Endothelial cell of umbilical vein (primary cell): ENCODE measurements at regions of chr4 and their contacts with region 1.

Region 1: DNA sequence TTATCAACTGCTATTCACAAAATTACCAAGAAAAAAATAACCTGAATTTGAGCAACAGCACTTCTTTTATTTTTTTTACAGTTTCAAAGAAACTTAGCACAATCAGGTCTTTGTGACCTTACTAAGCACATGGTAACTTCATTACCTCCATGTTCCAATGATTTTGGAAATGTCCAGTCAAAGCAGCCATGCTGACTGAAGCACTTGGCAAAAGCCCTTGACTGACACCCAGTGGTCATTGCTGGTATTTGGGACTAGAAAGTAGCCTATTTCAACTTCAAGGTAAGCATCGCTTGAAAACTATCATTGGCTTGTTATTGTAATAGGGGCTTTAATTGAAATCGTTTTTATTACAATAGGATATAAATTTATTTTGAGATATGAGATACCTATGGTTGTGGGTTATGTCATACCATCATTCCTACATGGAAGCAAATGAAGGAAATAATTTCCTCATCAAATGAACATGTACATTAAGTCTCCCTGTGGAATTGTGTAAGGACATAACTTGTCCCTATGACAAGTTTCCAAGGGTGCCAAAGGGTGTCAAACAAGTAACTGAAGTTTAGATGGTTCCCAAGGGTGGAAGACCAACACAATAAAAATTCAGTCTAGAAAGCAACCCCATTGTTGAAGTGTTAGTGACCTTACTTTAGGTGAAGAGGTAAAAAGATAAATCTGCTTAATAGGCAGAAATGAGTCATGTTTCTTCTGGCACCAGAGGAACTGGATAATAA is 15.2 kb upstream of the ANXA10 start:
- DNase-seq: peak; percentile 81
- H3K4me3 ChIP-seq: no peak overlapping the region
- H3K27ac ChIP-seq: no peak overlapping the region
- H3K4me1 ChIP-seq: peaks cover 8% of the 10 kb centered on the region
- H3K27me3 ChIP-seq: no peaks in the 10 kb centered on the region
- CTCF ChIP-seq: peak; percentile 73 to 75
- POLR2A ChIP-seq: no peak

Region 2: GRCh38 chr4:167290678-167291077 is 786.5 kb before region 1 on chr4:
- CTCF ChIA-PET with region 1: no interaction called
- POLR2A ChIA-PET with region 1: no interaction called
- dilution Hi-C with region 1: no loop called
- intact Hi-C with region 1: loop called (anchors 2 kb)
- DNase-seq: peak; percentile 11
- H3K4me3 ChIP-seq: no peak overlapping the region
- H3K27ac ChIP-seq: no peak overlapping the region
- H3K4me1 ChIP-seq: no peaks in the 10 kb centered on the region
- H3K27me3 ChIP-seq: no peaks in the 10 kb centered on the region
- CTCF ChIP-seq: peak; percentile 12 to 18
- POLR2A ChIP-seq: no peak

Region 3: GRCh38 chr4:167622481-167623246 is 454.5 kb before region 1 on chr4:
- CTCF ChIA-PET with region 1: interaction called, 7 read pairs
- POLR2A ChIA-PET with region 1: no interaction called
- dilution Hi-C with region 1: no loop called
- intact Hi-C with region 1: loop called (anchors 1 kb)
- DNase-seq: peak; percentile 53
- H3K4me3 ChIP-seq: no peak overlapping the region
- H3K27ac ChIP-seq: no peak overlapping the region
- H3K4me1 ChIP-seq: no peaks in the 10 kb centered on the region
- H3K27me3 ChIP-seq: no peaks in the 10 kb centered on the region
- CTCF ChIP-seq: peak; percentile 78 to 91
- POLR2A ChIP-seq: no peak

Region 4: GRCh38 chr4:167802463-167803212 is 274.5 kb before region 1 on chr4:
- CTCF ChIA-PET with region 1: no interaction called
- POLR2A ChIA-PET with region 1: no interaction called
- dilution Hi-C with region 1: no loop called
- intact Hi-C with region 1: no loop called
- DNase-seq: no peak
- H3K4me3 ChIP-seq: no peak overlapping the region
- H3K27ac ChIP-seq: no peak overlapping the region
- H3K4me1 ChIP-seq: no peaks in the 10 kb centered on the region
- H3K27me3 ChIP-seq: no peaks in the 10 kb centered on the region
- CTCF ChIP-seq: no peak
- POLR2A ChIP-seq: no peak

Region 5: GRCh38 chr4:167897116-167897515 is 180.0 kb before region 1 on chr4:
- CTCF ChIA-PET with region 1: no interaction called
- POLR2A ChIA-PET with region 1: no interaction called
- dilution Hi-C with region 1: no loop called
- intact Hi-C with region 1: loop called (anchors 1 kb)
- DNase-seq: peak; percentile 96
- H3K4me3 ChIP-seq: no peak overlapping the region
- H3K27ac ChIP-seq: peak overlapping the region; percentile 67
- H3K4me1 ChIP-seq: peaks cover 2% of the 10 kb centered on the region
- H3K27me3 ChIP-seq: no peaks in the 10 kb centered on the region
- CTCF ChIP-seq: no peak
- POLR2A ChIP-seq: peak; percentile 65

Region 6: DNA sequence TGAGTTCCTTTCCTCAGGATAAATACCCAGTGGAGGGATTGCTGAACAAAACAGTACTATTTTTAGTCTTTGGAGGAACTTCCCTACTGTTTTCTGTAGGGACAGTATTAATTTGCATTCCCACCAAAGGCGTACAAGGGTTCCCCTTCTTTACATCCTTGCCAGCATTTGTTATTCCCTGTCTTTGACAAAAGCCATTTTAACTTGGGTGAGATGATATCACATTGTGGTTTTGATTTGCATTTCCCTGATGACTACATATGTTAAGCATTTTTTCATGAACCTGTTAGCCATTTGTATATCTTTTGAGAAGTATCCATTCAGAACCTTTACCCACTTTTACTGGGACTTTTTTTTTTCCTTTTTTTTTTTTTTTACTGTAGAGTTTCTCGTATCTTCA is 111.0 kb before region 1 on chr4:
- CTCF ChIA-PET with region 1: no interaction called
- POLR2A ChIA-PET with region 1: no interaction called
- dilution Hi-C with region 1: no loop called
- intact Hi-C with region 1: no loop called
- DNase-seq: peak; percentile 6
- H3K4me3 ChIP-seq: no peak overlapping the region
- H3K27ac ChIP-seq: no peak overlapping the region
- H3K4me1 ChIP-seq: no peaks in the 10 kb centered on the region
- H3K27me3 ChIP-seq: no peaks in the 10 kb centered on the region
- CTCF ChIP-seq: no peak
- POLR2A ChIP-seq: no peak

Region 7: GRCh38 chr4:168028568-168028967 is 48.6 kb before region 1 on chr4:
- CTCF ChIA-PET with region 1: no interaction called
- POLR2A ChIA-PET with region 1: no interaction called
- dilution Hi-C with region 1: no loop called
- intact Hi-C with region 1: loop called (anchors 1 kb)
- DNase-seq: peak; percentile 22
- H3K4me3 ChIP-seq: no peak overlapping the region
- H3K27ac ChIP-seq: no peak overlapping the region
- H3K4me1 ChIP-seq: no peaks in the 10 kb centered on the region
- H3K27me3 ChIP-seq: no peaks in the 10 kb centered on the region
- CTCF ChIP-seq: peak in 1 of 2 donors; percentile 18
- POLR2A ChIP-seq: no peak